PC-3 (cell line): ENCODE measurements at regions of chr12 and their contacts with region 1.

Region 1: DNA sequence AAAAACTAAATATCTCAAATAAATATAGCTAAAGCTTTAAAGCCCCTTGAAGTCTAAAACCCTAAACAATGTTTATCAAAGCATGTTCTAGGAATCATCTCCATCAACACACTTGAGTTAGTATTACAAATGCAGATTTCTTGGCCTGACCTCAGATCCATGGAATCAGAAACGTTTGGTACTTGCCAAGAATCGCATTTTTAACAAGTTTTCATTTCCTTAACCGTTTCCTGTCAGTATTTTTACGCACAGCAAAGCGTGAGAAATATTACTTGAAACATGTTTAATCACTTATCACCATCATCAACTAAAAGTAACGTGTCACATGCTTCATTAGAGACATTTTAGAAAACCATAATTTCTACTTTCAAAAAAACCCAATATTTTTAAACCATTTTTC is 9.7 kb downstream of the SLCO1C1 start:
- DNase-seq: no peak
- ATAC-seq: no peak
- H3K4me3 ChIP-seq: no peak overlapping the region
- H3K27ac ChIP-seq: no peak overlapping the region
- H3K4me1 ChIP-seq: no peaks in the 10 kb centered on the region
- H3K27me3 ChIP-seq: no peaks in the 10 kb centered on the region
- CTCF ChIP-seq: no peak

Region 2: DNA sequence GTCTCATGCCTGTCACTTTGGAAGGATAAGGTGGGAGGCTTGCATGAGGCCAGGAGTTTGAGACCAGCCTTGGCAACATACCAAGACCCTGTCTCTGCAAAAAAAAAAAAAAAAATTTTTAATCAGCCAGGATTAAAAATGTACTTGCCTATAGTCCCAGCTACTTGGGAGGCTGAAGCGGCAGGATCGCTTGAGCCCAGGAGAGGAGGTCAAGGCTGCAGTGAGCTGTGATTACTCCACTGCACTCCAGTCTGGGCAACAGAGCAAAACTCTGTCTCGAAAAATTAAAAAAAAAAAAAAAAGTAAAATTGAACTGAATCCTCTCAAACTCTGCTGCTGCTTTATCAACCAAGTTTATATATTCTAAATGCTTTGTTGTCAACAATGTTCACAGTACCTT is 1393.7 kb before region 1 on chr12:
- CTCF ChIA-PET with region 1: no interaction called
- POLR2A ChIA-PET with region 1: interaction called, 17 read pairs
- intact Hi-C with region 1: no loop called
- DNase-seq: no peak
- ATAC-seq: no peak
- H3K4me3 ChIP-seq: no peak overlapping the region
- H3K27ac ChIP-seq: no peak overlapping the region
- H3K4me1 ChIP-seq: no peaks in the 10 kb centered on the region
- H3K27me3 ChIP-seq: no peaks in the 10 kb centered on the region
- CTCF ChIP-seq: no peak